B cell (primary cell): ENCODE measurements at regions of chr12 and their contacts with region 1.

Region 1: GRCh38 chr12:56104109-56104814 is at the start of gene PA2G4:
- DNase-seq: peak; percentile 95
- ATAC-seq: peak; percentile 89
- H3K4me3 ChIP-seq: peak within 1 kb of the TSS; percentile 56 to 93 (median 86)
- H3K4me3 Mint-ChIP-seq: peak within 1 kb of the TSS; percentile 100
- H3K27ac ChIP-seq: peak within 1 kb of the TSS; percentile 66 to 67
- H3K27ac Mint-ChIP-seq: peak within 1 kb of the TSS; percentile 92
- H3K4me1 ChIP-seq: peaks cover 18 to 23% of the 10 kb centered on the region in 2 donors
- H3K4me1 Mint-ChIP-seq: peaks cover 38% of the 10 kb centered on the region
- H3K27me3 ChIP-seq: no peaks in the 10 kb centered on the region
- H3K27me3 Mint-ChIP-seq: no peaks in the 10 kb centered on the region
- CTCF ChIP-seq: no peak
- total RNA-seq, gene PA2G4: 77.3 and 84.6 TPM in 2 replicates

Region 2: GRCh38 chr12:55296469-55296868 is 807.8 kb before region 1 on chr12 and contains the start of gene OR6C6:
- CTCF ChIA-PET with region 1: no interaction called
- POLR2A ChIA-PET with region 1: no interaction called
- intact Hi-C with region 1: no loop called
- DNase-seq: no peak
- ATAC-seq: no peak
- H3K4me3 ChIP-seq: no peak within 1 kb of the TSS
- H3K4me3 Mint-ChIP-seq: no peak within 1 kb of the TSS
- H3K27ac ChIP-seq: no peak within 1 kb of the TSS
- H3K27ac Mint-ChIP-seq: no peak within 1 kb of the TSS
- H3K4me1 ChIP-seq: no peaks in the 10 kb centered on the region
- H3K4me1 Mint-ChIP-seq: no peaks in the 10 kb centered on the region
- H3K27me3 ChIP-seq: peaks cover 0 to 11% (median 0%) of the 10 kb centered on the region in 4 experiments
- H3K27me3 Mint-ChIP-seq: peaks cover 26% of the 10 kb centered on the region
- CTCF ChIP-seq: no peak
- total RNA-seq, gene OR6C6: not detected in 2 replicates

Region 3: GRCh38 chr12:55926738-55927587 is 177.3 kb before region 1 on chr12:
- CTCF ChIA-PET with region 1: no interaction called
- POLR2A ChIA-PET with region 1: no interaction called
- intact Hi-C with region 1: loop called (anchors 1 kb)
- DNase-seq: peak; percentile 94
- ATAC-seq: peak; percentile 50
- H3K4me3 ChIP-seq: peak overlapping the region; percentile 88 to 100 (median 98)
- H3K4me3 Mint-ChIP-seq: peak overlapping the region; percentile 94
- H3K27ac ChIP-seq: peak overlapping the region; percentile 67 to 92
- H3K27ac Mint-ChIP-seq: peak overlapping the region; percentile 97
- H3K4me1 ChIP-seq: peaks cover 33 to 45% of the 10 kb centered on the region in 2 donors
- H3K4me1 Mint-ChIP-seq: peaks cover 54% of the 10 kb centered on the region
- H3K27me3 ChIP-seq: no peaks in the 10 kb centered on the region
- H3K27me3 Mint-ChIP-seq: no peaks in the 10 kb centered on the region
- CTCF ChIP-seq: peak; percentile 87

Region 4: GRCh38 chr12:55966408-55967281 is 137.6 kb before region 1 on chr12 and contains the start of gene CDK2:
- CTCF ChIA-PET with region 1: no interaction called
- POLR2A ChIA-PET with region 1: interaction called, 11 read pairs
- intact Hi-C with region 1: loop called (anchors 5 kb)
- DNase-seq: peak; percentile 87
- ATAC-seq: peak; percentile 100
- H3K4me3 ChIP-seq: peak within 1 kb of the TSS; percentile 65 to 82 (median 81)
- H3K4me3 Mint-ChIP-seq: peak within 1 kb of the TSS; percentile 93
- H3K27ac ChIP-seq: peak within 1 kb of the TSS in 1 of 2 donors; percentile 77
- H3K27ac Mint-ChIP-seq: peak within 1 kb of the TSS; percentile 78
- H3K4me1 ChIP-seq: peaks cover 16 to 20% of the 10 kb centered on the region in 2 donors
- H3K4me1 Mint-ChIP-seq: peaks cover 34% of the 10 kb centered on the region
- H3K27me3 ChIP-seq: no peaks in the 10 kb centered on the region
- H3K27me3 Mint-ChIP-seq: no peaks in the 10 kb centered on the region
- CTCF ChIP-seq: no peak
- total RNA-seq, gene CDK2: 32.7 and 32.8 TPM in 2 replicates

Region 5: GRCh38 chr12:56007564-56008559 is 96.4 kb before region 1 on chr12:
- CTCF ChIA-PET with region 1: no interaction called
- POLR2A ChIA-PET with region 1: interaction called, 8 read pairs
- intact Hi-C with region 1: loop called (anchors 1 kb)
- DNase-seq: peak; percentile 69
- ATAC-seq: peak; percentile 91
- H3K4me3 ChIP-seq: peak overlapping the region; percentile 31 to 81 (median 62)
- H3K4me3 Mint-ChIP-seq: peak overlapping the region; percentile 91
- H3K27ac ChIP-seq: peak overlapping the region; percentile 4 to 64
- H3K27ac Mint-ChIP-seq: peak overlapping the region; percentile 80
- H3K4me1 ChIP-seq: peaks cover 5 to 11% of the 10 kb centered on the region in 2 donors
- H3K4me1 Mint-ChIP-seq: peaks cover 14% of the 10 kb centered on the region
- H3K27me3 ChIP-seq: no peaks in the 10 kb centered on the region
- H3K27me3 Mint-ChIP-seq: no peaks in the 10 kb centered on the region
- CTCF ChIP-seq: no peak

Region 6: DNA sequence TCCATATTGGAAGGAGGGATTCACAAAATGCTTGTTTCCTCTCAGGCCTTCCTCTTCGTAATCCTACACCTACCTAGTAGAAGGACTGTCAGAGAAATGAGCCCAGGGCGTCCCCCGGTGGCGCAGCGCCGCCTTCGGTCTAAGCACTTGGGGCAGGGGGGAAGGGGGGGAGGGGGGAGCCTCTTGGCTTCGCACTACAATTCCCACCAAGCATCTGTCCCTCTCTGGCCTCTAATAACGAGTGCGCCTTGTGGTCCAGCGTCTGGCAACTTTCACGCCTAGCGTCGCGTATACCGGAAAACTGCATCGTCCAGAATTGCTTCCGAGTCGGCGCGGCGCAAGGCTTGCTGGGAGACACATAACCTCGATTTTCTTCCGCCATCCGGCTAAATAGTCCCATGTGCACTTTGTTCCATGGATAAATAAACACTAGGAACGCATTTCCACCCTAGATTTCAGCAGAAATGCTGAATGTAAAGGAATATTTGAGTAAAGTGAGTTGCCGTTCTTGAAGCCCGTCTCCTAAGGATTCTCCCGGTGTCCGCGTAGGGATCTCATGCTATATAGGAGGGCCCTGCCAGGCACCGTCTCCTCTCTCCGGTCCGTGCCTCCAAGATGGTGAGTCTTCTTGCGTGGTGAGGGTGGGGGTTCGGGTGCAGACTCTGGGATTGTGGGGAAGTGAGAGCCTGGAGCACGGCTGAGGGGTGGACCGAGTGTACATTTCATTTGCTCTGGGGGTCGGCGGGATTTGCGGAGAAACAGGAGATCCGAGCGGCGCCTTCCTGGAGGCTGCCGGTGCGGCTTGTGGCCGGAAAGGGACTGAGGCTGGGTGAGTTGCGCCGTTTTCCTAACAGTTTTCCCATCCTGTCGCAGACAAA is 62.5 kb before region 1 on chr12 and contains the start of gene RPS26:
- CTCF ChIA-PET with region 1: interaction called, 10 read pairs
- POLR2A ChIA-PET with region 1: interaction called, 3 read pairs
- intact Hi-C with region 1: loop called (anchors 1 kb)
- DNase-seq: peak; percentile 99
- ATAC-seq: peak; percentile 93
- H3K4me3 ChIP-seq: peak within 1 kb of the TSS; percentile 70 to 99 (median 91)
- H3K4me3 Mint-ChIP-seq: peak within 1 kb of the TSS; percentile 98
- H3K27ac ChIP-seq: peak within 1 kb of the TSS; percentile 82 to 90
- H3K27ac Mint-ChIP-seq: peak within 1 kb of the TSS; percentile 97
- H3K4me1 ChIP-seq: peaks cover 19 to 21% of the 10 kb centered on the region in 2 donors
- H3K4me1 Mint-ChIP-seq: peaks cover 24% of the 10 kb centered on the region
- H3K27me3 ChIP-seq: no peaks in the 10 kb centered on the region
- H3K27me3 Mint-ChIP-seq: no peaks in the 10 kb centered on the region
- CTCF ChIP-seq: peak; percentile 67
- total RNA-seq, gene RPS26: 19.4 and 21.0 TPM in 2 replicates

Region 7: GRCh38 chr12:56152318-56153033 is 48.2 kb after region 1 on chr12 and contains the start of gene MYL6B:
- CTCF ChIA-PET with region 1: interaction called, 5 read pairs
- POLR2A ChIA-PET with region 1: interaction called, 3 read pairs
- intact Hi-C with region 1: loop called (anchors 1 kb)
- DNase-seq: peak; percentile 91
- ATAC-seq: peak; percentile 91
- H3K4me3 ChIP-seq: peak within 1 kb of the TSS; percentile 54 to 89 (median 81)
- H3K4me3 Mint-ChIP-seq: peak within 1 kb of the TSS; percentile 94
- H3K27ac ChIP-seq: peak within 1 kb of the TSS; percentile 74 to 88
- H3K27ac Mint-ChIP-seq: peak within 1 kb of the TSS; percentile 98
- H3K4me1 ChIP-seq: peaks cover 15 to 29% of the 10 kb centered on the region in 2 donors
- H3K4me1 Mint-ChIP-seq: peaks cover 36% of the 10 kb centered on the region
- H3K27me3 ChIP-seq: no peaks in the 10 kb centered on the region
- H3K27me3 Mint-ChIP-seq: no peaks in the 10 kb centered on the region
- CTCF ChIP-seq: no peak
- total RNA-seq, gene MYL6B: 23.7 and 25.7 TPM in 2 replicates

Region 8: DNA sequence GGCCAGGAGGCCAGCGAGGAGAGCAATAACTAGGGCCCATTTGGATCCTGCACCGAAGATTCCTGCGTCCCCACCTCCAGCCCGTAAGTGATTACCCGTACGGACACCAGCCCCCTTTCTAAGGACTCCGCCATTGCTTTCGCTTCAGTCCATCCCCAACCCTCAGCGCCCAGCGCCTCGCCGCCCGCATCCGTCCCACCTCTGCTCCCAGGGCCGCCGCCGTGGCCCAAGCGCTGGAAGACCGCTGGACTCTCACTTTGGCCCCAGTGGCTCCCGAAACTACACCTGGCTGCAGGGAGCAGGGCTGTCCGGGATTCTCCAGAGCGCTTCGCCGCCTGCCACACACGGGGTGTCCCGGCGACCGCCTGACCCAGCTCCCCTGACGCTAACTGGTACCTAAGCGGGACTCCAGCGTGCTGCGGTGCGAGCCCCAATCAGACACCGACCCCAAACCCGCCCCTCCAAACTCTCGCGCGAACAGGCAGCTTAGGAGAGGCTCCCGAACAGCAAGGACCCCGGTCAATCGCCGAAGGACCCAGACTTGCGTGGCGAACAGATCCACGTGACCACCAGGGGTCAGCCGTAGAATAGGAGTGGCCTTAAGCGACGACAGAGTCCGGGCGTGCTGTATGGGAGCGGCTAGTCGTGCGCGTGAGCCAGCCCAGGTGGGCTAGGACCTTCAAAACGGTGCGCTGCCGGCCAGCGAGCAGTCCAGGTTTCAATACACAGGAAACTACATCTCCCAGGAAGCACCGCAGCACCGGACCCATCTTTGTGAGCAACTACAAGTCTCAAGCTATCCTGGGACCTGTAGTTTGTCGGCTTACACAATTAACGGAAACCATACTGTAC is 211.6 kb after region 1 on chr12 and contains the start of gene CNPY2:
- CTCF ChIA-PET with region 1: no interaction called
- POLR2A ChIA-PET with region 1: no interaction called
- intact Hi-C with region 1: loop called (anchors 1 kb)
- DNase-seq: peak; percentile 99
- ATAC-seq: peak; percentile 86
- H3K4me3 ChIP-seq: peak within 1 kb of the TSS; percentile 78 to 94 (median 91)
- H3K4me3 Mint-ChIP-seq: peak within 1 kb of the TSS; percentile 99
- H3K27ac ChIP-seq: peak within 1 kb of the TSS; percentile 67 to 90
- H3K27ac Mint-ChIP-seq: peak within 1 kb of the TSS; percentile 99
- H3K4me1 ChIP-seq: peaks cover 12 to 15% of the 10 kb centered on the region in 2 donors
- H3K4me1 Mint-ChIP-seq: peaks cover 10% of the 10 kb centered on the region
- H3K27me3 ChIP-seq: no peaks in the 10 kb centered on the region
- H3K27me3 Mint-ChIP-seq: no peaks in the 10 kb centered on the region
- CTCF ChIP-seq: no peak
- total RNA-seq, gene CNPY2: 89.0 and 91.2 TPM in 2 replicates